ENCODE measurements at regions of chr14 and their contacts with region 1.

Region 1: GRCh38 chr14:31207755-31208545 is at the start of gene HECTD1:
- DNase-seq: peak; percentile 93
- ATAC-seq: peak; percentile 86
- H3K4me3 ChIP-seq: peak within 1 kb of the TSS; percentile 89 to 96 (median 95)
- H3K27ac ChIP-seq: peak within 1 kb of the TSS; percentile 94
- H3K4me1 ChIP-seq: peaks cover 35% of the 10 kb centered on the region
- H3K27me3 ChIP-seq: no peaks in the 10 kb centered on the region; a peak in 1 of 5 replicates
- CTCF ChIP-seq: peak; percentile 87
- EP300 ChIP-seq: peak; percentile 52 to 68
- POLR2A ChIP-seq: peak in 1 of 2 experiments; percentile 97; a peak in 2 of 4 replicates
- RAD21 ChIP-seq: peak; percentile 100
- total RNA-seq, gene HECTD1: 560 and 761 TPM in 2 replicates

Region 2: DNA sequence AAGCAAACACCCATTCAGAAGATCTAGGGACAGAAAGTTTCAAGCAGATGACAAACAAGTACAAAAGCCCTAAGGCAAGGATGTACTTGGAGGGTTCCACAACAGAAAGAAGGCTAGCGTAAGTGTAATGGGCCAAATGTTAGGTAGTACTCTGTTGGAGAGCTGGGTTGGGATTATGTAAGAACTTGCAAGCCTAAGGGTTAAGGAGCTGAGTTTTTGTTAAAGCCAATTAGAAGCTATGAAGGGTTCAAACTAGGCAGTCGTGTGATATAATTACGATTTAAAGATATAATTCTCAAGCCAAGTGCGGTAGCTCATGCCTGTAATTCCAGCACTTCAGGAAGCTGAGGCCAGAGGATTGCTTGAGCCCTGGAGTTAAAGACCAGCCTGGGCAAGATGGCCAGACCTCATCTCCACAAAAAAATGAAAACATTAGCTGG is 41.7 kb before region 1 on chr14:
- CTCF ChIA-PET with region 1: no interaction called
- POLR2A ChIA-PET with region 1: interaction called, 11 read pairs
- in situ Hi-C with region 1: no loop called
- intact Hi-C with region 1: no loop called
- DNase-seq: no peak
- ATAC-seq: no peak; the same call in 2 of the 3 replicates
- H3K4me3 ChIP-seq: no peak overlapping the region
- H3K27ac ChIP-seq: no peak overlapping the region
- H3K4me1 ChIP-seq: peaks cover 37% of the 10 kb centered on the region
- H3K27me3 ChIP-seq: no peaks in the 10 kb centered on the region
- CTCF ChIP-seq: no peak
- EP300 ChIP-seq: no peak
- POLR2A ChIP-seq: no peak
- RAD21 ChIP-seq: no peak

Region 3: GRCh38 chr14:31251028-31251958 is 43.3 kb after region 1 on chr14:
- CTCF ChIA-PET with region 1: no interaction called
- POLR2A ChIA-PET with region 1: interaction called, 323 read pairs
- in situ Hi-C with region 1: no loop called
- intact Hi-C with region 1: no loop called
- DNase-seq: no peak
- ATAC-seq: peak; percentile 69
- H3K4me3 ChIP-seq: no peak overlapping the region
- H3K27ac ChIP-seq: no peak overlapping the region
- H3K4me1 ChIP-seq: peaks cover 53% of the 10 kb centered on the region
- H3K27me3 ChIP-seq: no peaks in the 10 kb centered on the region
- CTCF ChIP-seq: no peak
- EP300 ChIP-seq: no peak
- POLR2A ChIP-seq: no peak
- RAD21 ChIP-seq: no peak

Region 4: GRCh38 chr14:31275731-31276130 is 67.8 kb after region 1 on chr14:
- CTCF ChIA-PET with region 1: interaction called, 12 read pairs
- POLR2A ChIA-PET with region 1: interaction called, 32 read pairs
- in situ Hi-C with region 1: no loop called
- intact Hi-C with region 1: loop called (anchors 2 kb)
- DNase-seq: no peak
- ATAC-seq: no peak
- H3K4me3 ChIP-seq: no peak overlapping the region
- H3K27ac ChIP-seq: no peak overlapping the region
- H3K4me1 ChIP-seq: peaks cover 48% of the 10 kb centered on the region
- H3K27me3 ChIP-seq: no peaks in the 10 kb centered on the region
- CTCF ChIP-seq: no peak
- EP300 ChIP-seq: no peak
- POLR2A ChIP-seq: no peak
- RAD21 ChIP-seq: no peak

Region 5: DNA sequence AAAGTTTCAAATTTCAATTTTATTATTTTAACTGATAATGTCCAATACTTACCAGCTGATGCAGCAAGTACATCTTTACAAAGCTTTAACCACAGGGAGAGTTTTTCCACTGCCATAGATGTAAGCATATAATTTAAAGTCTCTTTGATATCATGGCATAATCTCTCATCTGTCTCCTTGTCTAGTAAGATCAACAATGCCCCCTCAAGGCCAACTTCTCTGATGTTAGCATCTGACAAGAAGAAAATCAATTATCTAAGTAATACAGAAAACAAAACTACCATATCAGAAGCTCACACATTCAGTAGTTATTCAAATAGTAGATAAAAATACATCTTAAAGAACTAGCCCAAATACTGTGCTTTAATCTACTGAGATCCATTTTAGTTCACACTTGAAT is 118.2 kb after region 1 on chr14:
- CTCF ChIA-PET with region 1: interaction called, 3 read pairs
- POLR2A ChIA-PET with region 1: interaction called, 5 read pairs
- in situ Hi-C with region 1: no loop called
- intact Hi-C with region 1: loop called (anchors 2 kb)
- DNase-seq: peak; percentile 26
- ATAC-seq: no peak
- H3K4me3 ChIP-seq: no peak overlapping the region
- H3K27ac ChIP-seq: no peak overlapping the region
- H3K4me1 ChIP-seq: no peaks in the 10 kb centered on the region; the same call in 1 of the 2 replicates
- H3K27me3 ChIP-seq: no peaks in the 10 kb centered on the region
- CTCF ChIP-seq: peak; percentile 59
- EP300 ChIP-seq: no peak
- POLR2A ChIP-seq: no peak
- RAD21 ChIP-seq: no peak

Region 6: GRCh38 chr14:31420319-31421111 is 212.6 kb after region 1 on chr14 and contains the start of gene HEATR5A:
- CTCF ChIA-PET with region 1: no interaction called
- POLR2A ChIA-PET with region 1: interaction called, 36 read pairs
- in situ Hi-C with region 1: no loop called
- intact Hi-C with region 1: loop called (anchors 5 kb)
- DNase-seq: peak; percentile 98
- ATAC-seq: peak; percentile 90
- H3K4me3 ChIP-seq: peak within 1 kb of the TSS; percentile 73 to 99 (median 85)
- H3K27ac ChIP-seq: peak within 1 kb of the TSS; percentile 89
- H3K4me1 ChIP-seq: peaks cover 27% of the 10 kb centered on the region
- H3K27me3 ChIP-seq: no peaks in the 10 kb centered on the region; a peak in 1 of 5 replicates
- CTCF ChIP-seq: peak; percentile 76
- EP300 ChIP-seq: peak in 1 of 2 experiments; percentile 87; a peak in 1 of 4 replicates
- POLR2A ChIP-seq: peak in 1 of 2 experiments; percentile 99; a peak in 2 of 4 replicates
- RAD21 ChIP-seq: peak; percentile 74
- total RNA-seq, gene HEATR5A: 105 and 172 TPM in 2 replicates